CD8-positive, alpha-beta T cell (primary cell): ENCODE measurements at regions of chr3 and their contacts with region 1.

Region 1: DNA sequence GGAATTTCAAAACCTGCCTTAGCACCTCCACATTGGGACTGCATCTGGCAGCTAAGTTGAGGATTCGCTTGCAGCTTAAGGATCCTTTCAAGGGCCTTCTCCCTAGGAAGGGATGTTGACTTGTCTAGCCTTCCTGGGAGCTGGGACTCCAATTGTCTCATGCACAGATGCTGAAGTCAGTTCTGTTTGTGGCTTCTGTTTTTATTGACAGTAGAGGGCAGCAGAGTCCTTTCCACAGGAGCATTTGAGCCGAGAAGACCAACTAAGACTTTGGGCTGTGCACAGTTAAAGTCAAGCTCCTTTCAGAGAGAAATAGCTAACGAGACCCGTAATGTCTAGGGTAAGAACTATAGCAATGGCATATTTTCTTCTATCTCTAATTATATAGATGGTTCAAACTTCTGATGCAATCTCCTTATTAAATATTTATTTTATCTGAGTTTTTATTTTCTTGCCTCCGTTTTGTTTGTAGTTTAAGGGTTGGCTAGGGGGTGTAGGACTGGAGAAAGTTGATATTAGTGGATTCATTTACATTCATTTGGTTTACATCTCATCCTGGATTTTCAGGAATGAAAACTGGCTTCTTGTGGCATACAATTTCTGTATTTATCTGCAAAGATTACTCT is 59.7 kb upstream of the KBTBD8 start:
- DNase-seq: peak in 6 of 9 experiments; percentile 1 to 59 (median 15)
- ATAC-seq: no peak
- H3K4me3 ChIP-seq: no peak overlapping the region
- H3K4me3 Mint-ChIP-seq: no peak overlapping the region
- H3K27ac ChIP-seq: no peak overlapping the region
- H3K27ac Mint-ChIP-seq: no peak overlapping the region
- H3K4me1 ChIP-seq: no peaks in the 10 kb centered on the region
- H3K4me1 Mint-ChIP-seq: no peaks in the 10 kb centered on the region
- H3K27me3 ChIP-seq: no peaks in the 10 kb centered on the region
- H3K27me3 Mint-ChIP-seq: peaks cover 29% of the 10 kb centered on the region
- CTCF ChIP-seq: peak; percentile 34

Region 2: DNA sequence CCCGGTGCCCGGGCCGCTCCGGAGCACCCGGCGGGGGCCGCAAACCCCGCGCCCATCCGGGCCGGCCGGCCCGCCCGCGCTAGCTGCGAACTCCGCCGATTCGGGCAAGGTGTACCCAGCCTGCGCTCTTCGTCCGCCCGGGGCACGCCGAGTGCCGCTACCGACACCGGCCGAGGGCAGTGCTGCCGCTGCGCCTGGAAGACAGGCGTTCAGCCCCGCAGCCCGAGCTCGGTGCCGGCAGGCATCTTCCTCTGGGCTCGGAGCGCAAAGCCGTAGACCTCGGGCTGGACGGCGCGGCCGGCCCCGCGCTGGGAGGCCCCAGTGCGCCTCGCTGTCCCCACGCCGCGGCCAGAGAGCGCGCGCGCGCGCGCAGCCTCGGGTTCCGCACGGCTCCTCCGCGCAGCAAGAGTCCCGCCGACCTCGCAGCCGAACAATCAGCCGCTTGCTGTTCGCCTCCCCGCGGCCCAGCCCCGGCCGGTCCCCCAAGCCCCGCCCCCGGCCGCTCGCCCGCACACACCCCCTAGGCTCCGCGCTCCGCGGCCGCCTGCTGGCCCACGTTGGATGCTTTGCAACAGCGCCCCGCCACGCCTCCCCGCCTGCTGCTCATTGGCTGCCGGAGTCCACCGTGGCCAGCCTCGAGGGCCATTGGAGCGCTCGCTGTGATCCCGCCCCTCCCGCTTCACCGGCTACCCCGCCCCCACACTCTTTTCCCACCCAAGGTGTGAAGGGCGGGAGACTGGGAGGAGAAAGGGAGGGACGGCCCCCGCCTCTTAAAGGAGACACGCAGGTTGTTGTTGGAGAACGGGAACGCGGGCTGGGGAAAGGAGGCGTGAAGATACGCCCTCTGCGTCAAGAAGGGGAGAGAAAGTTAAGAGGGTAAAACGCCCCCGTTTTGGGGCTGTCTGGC is 437.6 kb before region 1 on chr3 and contains the start of gene LRIG1:
- CTCF ChIA-PET with region 1: no interaction called
- POLR2A ChIA-PET with region 1: no interaction called
- intact Hi-C with region 1: no loop called
- DNase-seq: peak; percentile 95 to 98 (median 97)
- ATAC-seq: peak; percentile 94
- H3K4me3 ChIP-seq: peak within 1 kb of the TSS; percentile 54 to 66
- H3K4me3 Mint-ChIP-seq: peak within 1 kb of the TSS; percentile 94
- H3K27ac ChIP-seq: peak within 1 kb of the TSS in 1 of 2 experiments; percentile 29
- H3K27ac Mint-ChIP-seq: peak within 1 kb of the TSS; percentile 69
- H3K4me1 ChIP-seq: peaks cover 35% of the 10 kb centered on the region
- H3K4me1 Mint-ChIP-seq: peaks cover 60% of the 10 kb centered on the region
- H3K27me3 ChIP-seq: peaks cover 0 to 4% of the 10 kb centered on the region in 2 experiments
- H3K27me3 Mint-ChIP-seq: peaks cover 8% of the 10 kb centered on the region
- CTCF ChIP-seq: peak; percentile 54
- total RNA-seq, gene LRIG1: 38.2 to 39.4 TPM

Region 3: DNA sequence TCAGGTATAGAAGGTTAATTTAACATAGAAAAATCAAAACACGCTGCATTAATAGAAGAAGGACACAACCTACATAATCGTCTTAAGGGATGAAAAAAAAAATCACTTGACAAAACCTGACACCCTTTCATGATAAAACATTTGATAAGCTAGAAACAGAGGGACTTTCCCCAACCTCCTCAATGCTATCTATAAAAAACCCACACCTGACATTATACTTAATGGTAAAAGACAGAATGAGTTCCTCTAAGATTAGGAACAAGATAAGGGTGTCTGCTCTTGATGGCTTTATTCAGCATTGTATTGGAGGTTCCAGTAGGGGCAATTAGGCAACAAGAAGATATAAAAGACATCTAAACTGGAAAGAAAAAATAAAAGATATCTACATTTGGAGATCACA is 10.2 kb before region 1 on chr3:
- CTCF ChIA-PET with region 1: interaction called, 12 read pairs
- POLR2A ChIA-PET with region 1: no interaction called
- intact Hi-C with region 1: no loop called
- DNase-seq: no peak
- ATAC-seq: no peak
- H3K4me3 ChIP-seq: no peak overlapping the region
- H3K4me3 Mint-ChIP-seq: no peak overlapping the region
- H3K27ac ChIP-seq: no peak overlapping the region
- H3K27ac Mint-ChIP-seq: no peak overlapping the region
- H3K4me1 ChIP-seq: no peaks in the 10 kb centered on the region
- H3K4me1 Mint-ChIP-seq: no peaks in the 10 kb centered on the region
- H3K27me3 ChIP-seq: no peaks in the 10 kb centered on the region
- H3K27me3 Mint-ChIP-seq: peaks cover 6% of the 10 kb centered on the region
- CTCF ChIP-seq: no peak

Region 4: DNA sequence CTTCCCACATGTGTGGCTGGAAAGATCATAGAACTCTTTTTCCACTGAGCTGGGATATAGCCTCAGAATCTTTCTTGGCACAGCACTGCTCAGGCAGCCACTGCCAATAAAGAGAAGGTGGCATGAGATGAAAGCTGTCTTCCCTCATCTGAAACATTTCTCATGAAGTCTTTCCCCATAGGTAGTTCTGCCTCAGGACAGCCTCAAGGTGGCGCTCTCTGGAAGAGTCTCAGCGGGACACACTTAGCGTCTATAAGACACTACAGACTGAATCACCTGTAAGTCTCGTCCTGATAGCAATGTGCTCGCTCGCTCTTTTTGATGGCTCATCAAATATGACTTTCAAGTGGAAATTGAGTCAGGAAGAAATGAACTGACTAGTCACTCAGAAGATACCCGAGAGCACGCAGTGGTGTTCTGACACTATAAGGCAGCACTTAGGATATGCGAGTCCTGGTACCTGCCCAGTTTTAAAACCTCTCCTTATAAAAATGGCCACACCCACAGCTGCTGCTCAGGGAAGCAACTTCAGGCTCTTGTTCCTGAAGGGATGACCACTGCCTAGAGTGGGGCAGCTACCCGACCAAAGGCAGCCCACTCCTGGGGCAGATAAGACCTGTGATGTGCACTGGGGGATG is 446.4 kb after region 1 on chr3:
- CTCF ChIA-PET with region 1: no interaction called
- POLR2A ChIA-PET with region 1: no interaction called
- intact Hi-C with region 1: loop called in 1 of 2 experiments (anchors 10 kb)
- DNase-seq: peak in 7 of 9 experiments; percentile 4 to 54 (median 38)
- ATAC-seq: no peak
- H3K4me3 ChIP-seq: no peak overlapping the region
- H3K4me3 Mint-ChIP-seq: no peak overlapping the region
- H3K27ac ChIP-seq: no peak overlapping the region
- H3K27ac Mint-ChIP-seq: peak overlapping the region; percentile 18
- H3K4me1 ChIP-seq: no peaks in the 10 kb centered on the region
- H3K4me1 Mint-ChIP-seq: peaks cover 12% of the 10 kb centered on the region
- H3K27me3 ChIP-seq: no peaks in the 10 kb centered on the region
- H3K27me3 Mint-ChIP-seq: no peaks in the 10 kb centered on the region
- CTCF ChIP-seq: peak; percentile 45

Region 5: GRCh38 chr3:68893600-68894239 is 1955.3 kb after region 1 on chr3:
- CTCF ChIA-PET with region 1: interaction called, 9 read pairs
- POLR2A ChIA-PET with region 1: no interaction called
- intact Hi-C with region 1: loop called (anchors 1 kb)
- DNase-seq: peak in 3 of 9 experiments; percentile 16 to 56 (median 47)
- ATAC-seq: no peak
- H3K4me3 ChIP-seq: no peak overlapping the region
- H3K4me3 Mint-ChIP-seq: no peak overlapping the region
- H3K27ac ChIP-seq: no peak overlapping the region
- H3K27ac Mint-ChIP-seq: no peak overlapping the region
- H3K4me1 ChIP-seq: no peaks in the 10 kb centered on the region
- H3K4me1 Mint-ChIP-seq: no peaks in the 10 kb centered on the region
- H3K27me3 ChIP-seq: no peaks in the 10 kb centered on the region
- H3K27me3 Mint-ChIP-seq: no peaks in the 10 kb centered on the region
- CTCF ChIP-seq: peak; percentile 66